GM10248 (cell line): ENCODE measurements at regions of chr3 and their contacts with region 1.

Region 1: GRCh38 chr3:154252759-154253638 is 71.3 kb downstream of the DHX36 start:
- DNase-seq: peak; percentile 63
- CTCF ChIP-seq: peak; percentile 70

Region 2: DNA sequence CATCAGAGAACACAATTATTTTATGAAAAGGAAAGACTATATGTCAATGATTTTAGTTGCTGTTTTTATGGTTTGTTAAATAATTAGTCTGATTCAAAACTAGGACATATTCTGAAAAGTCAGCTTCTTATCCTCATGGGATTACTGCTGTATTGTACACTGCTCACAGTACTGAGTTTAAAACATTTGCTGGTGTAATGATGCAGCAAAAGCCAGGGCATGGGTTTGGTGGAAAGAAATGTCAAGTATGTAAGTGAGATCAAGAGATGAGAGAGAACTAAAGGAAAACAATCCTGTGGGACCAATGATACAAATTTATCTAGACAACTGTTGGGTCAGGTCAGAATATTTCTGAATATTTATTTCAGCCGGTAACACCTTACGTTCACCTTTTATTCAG is 341.9 kb before region 1 on chr3:
- CTCF ChIA-PET with region 1: no interaction called
- POLR2A ChIA-PET with region 1: no interaction called
- DNase-seq: no peak
- CTCF ChIP-seq: no peak

Region 3: DNA sequence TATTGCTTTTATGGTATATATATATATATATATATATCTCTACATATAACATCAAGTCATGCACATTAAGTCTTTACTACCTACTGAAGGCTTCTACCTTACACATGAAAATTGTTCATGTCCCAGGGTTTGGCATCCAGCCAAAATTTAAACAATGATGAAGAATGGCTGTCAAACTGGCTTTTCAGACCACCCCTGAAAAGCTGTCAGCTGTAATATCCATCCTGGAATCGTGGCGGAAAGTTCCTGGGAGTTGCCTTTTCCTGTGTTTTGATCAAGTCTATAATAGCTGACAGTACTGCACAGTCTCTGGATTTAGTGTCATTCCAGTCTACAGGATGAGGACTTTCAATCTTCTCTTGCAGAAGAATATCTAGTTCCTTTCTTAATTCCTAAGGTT is 23.0 kb after region 1 on chr3:
- CTCF ChIA-PET with region 1: interaction called, 11 read pairs
- POLR2A ChIA-PET with region 1: no interaction called
- DNase-seq: no peak
- CTCF ChIP-seq: no peak

Region 4: GRCh38 chr3:154290187-154290586 is 37.2 kb after region 1 on chr3:
- CTCF ChIA-PET with region 1: interaction called, 10 read pairs
- POLR2A ChIA-PET with region 1: no interaction called
- DNase-seq: no peak
- CTCF ChIP-seq: no peak

Region 5: GRCh38 chr3:155737844-155738460 is 1485.0 kb after region 1 on chr3:
- CTCF ChIA-PET with region 1: no interaction called
- POLR2A ChIA-PET with region 1: no interaction called
- DNase-seq: peak; percentile 54
- CTCF ChIP-seq: no peak